ENCODE measurements at regions of chr19 and their contacts with region 1.

Region 1: DNA sequence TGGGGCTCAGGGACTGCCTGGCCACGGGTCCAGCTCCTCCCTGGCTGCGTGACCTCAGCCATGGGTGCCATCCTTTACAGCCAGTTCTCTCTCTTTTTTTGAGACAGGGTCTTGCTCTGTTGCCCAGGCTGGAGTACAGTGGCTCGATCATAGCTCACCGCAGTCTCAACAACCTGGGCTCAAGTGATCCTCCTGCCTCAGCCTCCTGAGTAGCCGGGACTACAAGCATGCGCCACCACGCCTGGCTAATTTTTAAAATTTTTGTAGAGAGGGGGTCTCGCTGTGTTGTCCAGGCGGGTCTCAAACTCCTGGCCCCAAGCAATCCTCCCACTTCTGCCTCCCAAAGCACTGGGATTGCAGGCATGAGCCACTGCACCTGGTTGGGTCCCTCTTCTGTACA is 75.4 kb downstream of the PTPRS start:
- DNase-seq: no peak
- H3K4me3 ChIP-seq: no peak overlapping the region
- H3K27ac ChIP-seq: no peak overlapping the region
- H3K4me1 ChIP-seq: no peaks in the 10 kb centered on the region; a peak in 1 of 7 replicates
- H3K27me3 ChIP-seq: no peaks in the 10 kb centered on the region
- CTCF ChIP-seq: no peak
- EP300 ChIP-seq: no peak
- POLR2A ChIP-seq: no peak
- RAD21 ChIP-seq: no peak

Region 2: DNA sequence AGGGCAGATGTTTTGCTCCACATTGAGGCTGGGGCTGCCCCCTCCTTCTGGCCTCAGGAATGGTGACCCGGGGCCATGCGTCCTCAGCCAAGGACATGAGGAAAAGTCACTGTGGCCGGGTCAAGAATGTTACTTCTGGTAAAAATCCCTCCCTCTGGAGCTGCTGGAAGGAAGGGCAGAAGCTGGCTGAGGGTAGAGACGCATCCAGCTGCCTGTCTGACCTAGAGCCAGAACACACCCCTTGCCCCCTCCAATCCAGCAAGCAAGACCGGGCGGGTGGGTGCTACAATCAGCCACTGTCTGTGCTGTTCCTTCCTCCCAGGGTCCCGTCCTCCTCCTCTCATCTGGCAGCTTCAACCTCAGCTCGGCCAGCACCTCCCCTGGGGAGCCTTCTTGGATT is 16.3 kb after region 1 on chr19:
- CTCF ChIA-PET with region 1: interaction called, 5 read pairs
- POLR2A ChIA-PET with region 1: interaction called, 12 read pairs
- DNase-seq: no peak
- H3K4me3 ChIP-seq: no peak overlapping the region
- H3K27ac ChIP-seq: no peak overlapping the region
- H3K4me1 ChIP-seq: no peaks in the 10 kb centered on the region
- H3K27me3 ChIP-seq: no peaks in the 10 kb centered on the region
- CTCF ChIP-seq: no peak
- EP300 ChIP-seq: no peak
- POLR2A ChIP-seq: no peak
- RAD21 ChIP-seq: no peak

Measured in H1 (cell line).